Activated naive CD8-positive, alpha-beta T cell treated with anti-CD3 and anti-CD28 coated beads, Interleukin-2, amount 10 ng/mL, durations not matched to agents 7 days and 5 days (primary cell): ENCODE measurements at regions of chr19 and their contacts with region 1.

Region 1: DNA sequence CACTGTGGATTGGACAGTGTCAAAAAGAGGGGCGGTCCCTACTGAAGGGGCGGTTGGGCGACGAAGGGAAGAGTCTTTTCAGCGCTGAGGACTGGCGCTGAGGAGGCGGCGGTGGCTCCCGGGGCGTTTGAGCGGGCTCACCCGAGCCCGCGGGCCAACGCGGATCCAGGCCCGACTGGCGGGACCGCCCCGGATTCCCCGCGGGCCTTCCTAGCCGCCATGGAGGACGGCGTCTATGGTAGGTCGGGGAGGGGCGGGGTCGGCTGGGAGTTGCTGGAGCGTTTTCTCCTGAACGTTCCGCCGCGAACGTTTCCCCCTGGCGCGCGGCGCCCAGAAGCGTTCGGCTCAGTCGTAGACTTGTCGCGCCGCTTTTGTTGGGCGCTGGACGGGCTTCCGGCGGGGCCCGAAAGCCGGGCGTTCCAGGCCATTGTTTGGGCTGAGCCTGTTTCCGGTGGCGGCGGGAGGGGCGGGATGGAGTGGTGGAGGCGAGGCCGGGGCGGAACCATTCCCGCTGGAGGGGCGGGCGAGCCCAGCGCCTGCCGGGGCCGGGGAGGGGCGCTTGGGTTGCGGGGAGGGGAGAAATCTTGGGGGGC is at the start of gene CYTH2:
- DNase-seq: peak; percentile 81
- ATAC-seq: peak; percentile 24
- H3K4me3 Mint-ChIP-seq: peak within 1 kb of the TSS; percentile 84
- H3K27ac Mint-ChIP-seq: peak within 1 kb of the TSS; percentile 85
- H3K4me1 Mint-ChIP-seq: peaks cover 19% of the 10 kb centered on the region
- H3K27me3 Mint-ChIP-seq: no peaks in the 10 kb centered on the region
- total RNA-seq, gene CYTH2: 57.6 to 59.1 TPM

Region 2: DNA sequence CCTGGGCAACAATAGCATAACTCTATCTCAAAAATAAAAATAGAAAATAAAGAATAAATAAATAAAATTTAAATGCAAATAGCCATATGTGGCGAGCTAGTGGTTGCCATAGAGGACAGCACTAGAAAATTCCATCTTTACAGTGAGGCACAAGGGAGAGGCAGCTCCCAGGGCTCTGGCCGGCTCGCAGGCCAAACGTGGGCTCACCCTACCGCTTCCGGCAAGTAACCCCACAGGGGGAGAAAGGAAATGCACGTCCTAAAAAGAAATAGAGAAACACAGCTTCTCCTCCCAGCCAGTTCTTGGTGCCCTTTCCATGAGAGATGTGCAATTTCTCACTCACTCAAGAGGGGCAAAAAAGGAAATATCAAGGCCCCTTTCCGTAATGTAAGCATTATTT is 36.0 kb before region 1 on chr19:
- POLR2A ChIA-PET with region 1: no interaction called
- DNase-seq: no peak
- ATAC-seq: peak; percentile 39
- H3K4me3 Mint-ChIP-seq: no peak overlapping the region
- H3K27ac Mint-ChIP-seq: no peak overlapping the region
- H3K4me1 Mint-ChIP-seq: peaks cover 1% of the 10 kb centered on the region
- H3K27me3 Mint-ChIP-seq: peaks cover 17% of the 10 kb centered on the region

Region 3: DNA sequence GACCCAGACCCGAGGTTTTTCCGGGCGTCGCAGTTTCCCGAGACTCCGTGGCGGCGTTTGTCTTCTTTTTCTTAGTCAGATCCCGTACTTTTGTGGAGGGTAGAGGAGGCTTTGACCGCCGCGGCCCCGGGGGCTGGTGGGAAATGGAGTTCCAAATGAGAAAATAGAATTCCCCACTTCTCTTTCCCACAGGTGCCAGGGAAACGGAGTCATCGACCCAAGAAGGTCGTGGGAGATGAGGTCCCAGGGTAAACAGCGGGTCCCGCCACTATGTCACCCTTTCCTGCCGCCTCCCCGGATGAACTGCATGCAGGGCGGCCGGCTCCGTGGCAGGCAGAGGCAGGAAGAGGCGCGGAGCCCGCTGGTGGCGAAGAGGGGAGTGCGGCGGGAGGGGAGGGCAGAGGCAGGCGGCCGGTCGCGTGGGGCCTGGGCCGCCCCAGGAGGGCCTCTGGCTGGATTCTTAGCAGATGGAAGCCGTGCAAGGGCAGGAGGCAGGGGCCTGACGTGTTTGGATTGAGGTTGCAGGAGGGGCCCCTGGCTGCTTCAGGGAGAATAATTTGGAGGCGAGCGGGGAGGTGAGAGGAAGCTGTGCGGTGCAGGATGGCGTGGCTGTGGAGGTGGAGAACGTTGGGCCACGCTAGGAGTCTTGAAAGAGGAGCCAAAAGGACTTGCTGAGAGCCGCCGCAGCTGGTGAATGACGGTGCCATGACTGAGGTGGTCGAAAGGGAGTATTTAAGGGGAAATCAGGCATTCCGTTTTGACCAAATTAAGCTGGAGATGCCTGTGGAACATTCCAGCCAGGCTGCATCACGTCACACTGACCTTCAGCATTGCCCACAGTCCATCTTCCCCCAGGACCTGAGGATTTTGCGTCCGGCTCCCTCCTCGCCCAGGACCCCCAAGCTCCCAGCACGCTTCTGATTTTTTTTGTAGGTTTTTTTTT is 11.4 kb after region 1 on chr19:
- POLR2A ChIA-PET with region 1: interaction called, 20 read pairs
- DNase-seq: peak; percentile 82
- ATAC-seq: peak; percentile 90
- H3K4me3 Mint-ChIP-seq: peak overlapping the region; percentile 80
- H3K27ac Mint-ChIP-seq: peak overlapping the region; percentile 89
- H3K4me1 Mint-ChIP-seq: peaks cover 20% of the 10 kb centered on the region
- H3K27me3 Mint-ChIP-seq: no peaks in the 10 kb centered on the region

Region 4: GRCh38 chr19:48543121-48544056 is 74.0 kb after region 1 on chr19:
- POLR2A ChIA-PET with region 1: no interaction called
- DNase-seq: no peak
- ATAC-seq: no peak
- H3K4me3 Mint-ChIP-seq: no peak overlapping the region
- H3K27ac Mint-ChIP-seq: no peak overlapping the region
- H3K4me1 Mint-ChIP-seq: peaks cover 4% of the 10 kb centered on the region
- H3K27me3 Mint-ChIP-seq: no peaks in the 10 kb centered on the region